ENCODE measurements at regions of chr17 and their contacts with region 1.

Region 1: GRCh38 chr17:40219073-40219860 is at the start of gene WIPF2:
- DNase-seq: peak; percentile 92 to 98 (median 96)
- ATAC-seq: peak; percentile 90
- H3K4me3 ChIP-seq: peak within 1 kb of the TSS; percentile 83 to 87
- H3K4me3 Mint-ChIP-seq: peak within 1 kb of the TSS; percentile 95
- H3K27ac ChIP-seq: peak within 1 kb of the TSS; percentile 99
- H3K27ac Mint-ChIP-seq: peak within 1 kb of the TSS; percentile 100
- H3K4me1 ChIP-seq: peaks cover 8% of the 10 kb centered on the region
- H3K4me1 Mint-ChIP-seq: peaks cover 30% of the 10 kb centered on the region
- H3K27me3 ChIP-seq: no peaks in the 10 kb centered on the region
- H3K27me3 Mint-ChIP-seq: no peaks in the 10 kb centered on the region
- CTCF ChIP-seq: peak; percentile 53
- total RNA-seq, gene WIPF2: 26.8 to 30.8 TPM

Region 2: GRCh38 chr17:40177275-40177874 is 41.9 kb before region 1 on chr17 and contains the start of gene RAPGEFL1:
- CTCF ChIA-PET with region 1: no interaction called
- POLR2A ChIA-PET with region 1: no interaction called
- intact Hi-C with region 1: loop called in 1 of 2 experiments (anchors 1 kb)
- DNase-seq: peak; percentile 70 to 90 (median 81)
- ATAC-seq: peak; percentile 99
- H3K4me3 ChIP-seq: peak within 1 kb of the TSS; percentile 53 to 54
- H3K4me3 Mint-ChIP-seq: peak within 1 kb of the TSS; percentile 72
- H3K27ac ChIP-seq: no peak within 1 kb of the TSS
- H3K27ac Mint-ChIP-seq: no peak within 1 kb of the TSS
- H3K4me1 ChIP-seq: peaks cover 12% of the 10 kb centered on the region
- H3K4me1 Mint-ChIP-seq: peaks cover 11% of the 10 kb centered on the region
- H3K27me3 ChIP-seq: no peaks in the 10 kb centered on the region
- H3K27me3 Mint-ChIP-seq: no peaks in the 10 kb centered on the region
- CTCF ChIP-seq: no peak
- total RNA-seq, gene RAPGEFL1: 8.8 to 9.2 TPM

Region 3: DNA sequence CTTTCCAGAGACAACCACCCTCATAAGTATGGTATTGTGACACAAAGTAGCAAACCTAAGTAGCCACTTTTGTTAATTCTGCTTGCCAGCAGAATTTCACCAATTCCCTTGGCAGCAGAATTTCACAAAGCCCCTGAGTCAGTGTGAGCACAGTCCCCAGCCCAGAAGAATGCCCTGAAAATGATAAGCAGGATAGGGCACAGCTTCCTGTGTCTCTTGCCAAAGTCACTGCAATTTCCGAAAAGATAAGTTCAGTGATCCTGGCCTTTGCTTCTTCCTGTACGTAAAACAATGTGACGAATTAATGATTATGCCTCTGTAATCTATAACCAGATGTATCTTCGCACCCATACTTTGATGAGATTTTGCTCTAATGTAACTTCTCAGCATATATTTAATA is 16.1 kb before region 1 on chr17:
- CTCF ChIA-PET with region 1: interaction called, 7 read pairs
- POLR2A ChIA-PET with region 1: interaction called, 4 read pairs
- intact Hi-C with region 1: loop called (anchors 1 to 2 kb)
- DNase-seq: no peak
- ATAC-seq: no peak
- H3K4me3 ChIP-seq: no peak overlapping the region
- H3K4me3 Mint-ChIP-seq: no peak overlapping the region
- H3K27ac ChIP-seq: no peak overlapping the region
- H3K27ac Mint-ChIP-seq: no peak overlapping the region
- H3K4me1 ChIP-seq: no peaks in the 10 kb centered on the region
- H3K4me1 Mint-ChIP-seq: peaks cover 8% of the 10 kb centered on the region
- H3K27me3 ChIP-seq: peaks cover 0 to 4% of the 10 kb centered on the region in 2 experiments
- H3K27me3 Mint-ChIP-seq: peaks cover 6% of the 10 kb centered on the region
- CTCF ChIP-seq: no peak

Region 4: GRCh38 chr17:40686192-40686591 is 466.9 kb after region 1 on chr17:
- CTCF ChIA-PET with region 1: no interaction called
- POLR2A ChIA-PET with region 1: no interaction called
- intact Hi-C with region 1: no loop called
- DNase-seq: no peak
- ATAC-seq: no peak
- H3K4me3 ChIP-seq: no peak overlapping the region
- H3K4me3 Mint-ChIP-seq: no peak overlapping the region
- H3K27ac ChIP-seq: no peak overlapping the region
- H3K27ac Mint-ChIP-seq: no peak overlapping the region
- H3K4me1 ChIP-seq: no peaks in the 10 kb centered on the region
- H3K4me1 Mint-ChIP-seq: no peaks in the 10 kb centered on the region
- H3K27me3 ChIP-seq: no peaks in the 10 kb centered on the region
- H3K27me3 Mint-ChIP-seq: peaks cover 17% of the 10 kb centered on the region
- CTCF ChIP-seq: no peak